ENCODE measurements at regions of chr16 and their contacts with region 1.

Region 1: DNA sequence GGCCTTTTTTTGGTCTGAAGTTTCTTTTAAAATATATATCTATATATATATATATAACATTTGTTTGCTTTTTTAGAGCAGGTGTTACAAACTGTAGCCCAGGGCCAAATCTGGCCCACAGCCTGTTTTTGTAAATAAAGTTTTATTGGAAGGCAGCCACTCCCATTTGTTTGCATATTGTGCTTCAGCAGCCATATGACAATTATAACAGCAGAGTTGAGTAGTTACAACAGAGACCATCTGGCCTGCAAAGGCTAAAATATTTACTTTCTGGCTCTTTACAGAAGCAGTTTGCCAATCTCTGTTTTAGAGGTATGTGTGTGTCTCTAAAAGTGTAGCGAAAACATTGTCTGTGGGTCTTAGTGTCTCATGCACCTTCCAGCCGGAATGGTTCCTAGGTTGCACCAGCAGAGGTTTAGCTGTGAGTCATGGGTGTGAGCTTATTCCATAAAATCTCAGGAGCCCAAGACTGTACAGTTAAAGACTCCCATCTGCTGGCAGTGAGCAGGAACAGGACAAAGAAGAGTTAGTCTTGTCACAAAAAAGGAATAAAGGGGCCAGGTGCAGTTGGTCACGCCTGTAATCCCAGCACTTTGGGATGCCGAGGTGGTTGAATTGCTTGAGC is 23.8 kb downstream of the LCMT1 start:
- DNase-seq: peak; percentile 48
- H3K4me3 ChIP-seq: no peak overlapping the region
- H3K27ac ChIP-seq: no peak overlapping the region
- H3K4me1 ChIP-seq: no peaks in the 10 kb centered on the region
- H3K27me3 ChIP-seq: no peaks in the 10 kb centered on the region
- CTCF ChIP-seq: peak; percentile 16 to 39

Region 2: DNA sequence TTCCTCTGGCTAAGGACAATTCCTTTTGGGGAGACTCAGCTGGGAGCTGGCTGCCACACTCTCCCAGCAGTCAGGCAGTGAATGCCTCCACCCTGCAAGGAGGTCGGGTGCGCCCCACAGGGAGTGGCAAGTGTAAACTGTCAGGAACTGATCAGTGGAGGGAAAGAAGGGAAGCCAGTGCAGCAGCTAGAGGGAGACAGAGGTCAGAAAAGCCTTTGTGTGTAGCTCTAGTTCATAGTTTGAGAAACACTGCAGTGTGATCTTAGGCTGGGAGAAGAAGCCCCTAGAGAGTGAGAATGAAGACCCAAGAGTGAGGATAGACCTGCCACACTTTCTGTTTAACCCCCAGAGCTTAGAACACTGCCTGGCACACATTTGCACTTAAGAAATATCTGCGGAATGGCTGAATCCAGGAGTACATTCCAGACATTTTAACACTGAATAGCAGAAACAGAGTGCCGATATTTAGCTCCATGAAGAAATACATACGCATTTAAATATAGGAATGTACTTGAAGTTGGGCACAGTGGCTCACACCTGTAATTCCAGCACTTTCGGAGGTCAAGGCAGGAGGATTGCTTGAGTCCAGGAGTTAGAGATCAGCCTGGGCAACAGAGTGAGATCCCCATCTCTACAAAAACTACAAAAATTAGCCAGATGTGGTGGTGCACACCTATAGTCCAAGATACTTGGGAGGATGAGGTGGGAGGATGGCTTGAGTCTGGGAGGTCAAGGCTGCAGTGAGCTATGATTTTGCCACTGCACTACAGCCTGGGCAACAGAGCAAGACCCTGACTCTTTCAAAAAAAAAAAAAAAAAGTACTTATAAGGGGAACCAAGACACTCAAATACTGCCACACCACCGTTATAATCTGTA is 300.7 kb before region 1 on chr16:
- CTCF ChIA-PET with region 1: no interaction called
- dilution Hi-C with region 1: no loop called
- in situ Hi-C with region 1: no loop called
- intact Hi-C with region 1: loop called (anchors 1 kb)
- DNase-seq: peak; percentile 33
- H3K4me3 ChIP-seq: no peak overlapping the region
- H3K27ac ChIP-seq: no peak overlapping the region
- H3K4me1 ChIP-seq: no peaks in the 10 kb centered on the region
- H3K27me3 ChIP-seq: no peaks in the 10 kb centered on the region
- CTCF ChIP-seq: peak; percentile 49 to 75

Region 3: GRCh38 chr16:25089351-25089750 is 46.0 kb before region 1 on chr16:
- CTCF ChIA-PET with region 1: no interaction called
- dilution Hi-C with region 1: no loop called
- in situ Hi-C with region 1: no loop called
- intact Hi-C with region 1: no loop called
- DNase-seq: no peak
- H3K4me3 ChIP-seq: no peak overlapping the region
- H3K27ac ChIP-seq: no peak overlapping the region
- H3K4me1 ChIP-seq: no peaks in the 10 kb centered on the region
- H3K27me3 ChIP-seq: peaks cover under 1% of the 10 kb centered on the region
- CTCF ChIP-seq: no peak

Measured in mammary epithelial cell (primary cell).